Activated CD4-positive, alpha-beta memory T cell treated with anti-CD3 and anti-CD28 coated beads for 36 hours (primary cell): ENCODE measurements at regions of chr3 and their contacts with region 1.

Region 1: GRCh38 chr3:9430733-9431132 is 33.3 kb downstream of the SETD5 start:
- DNase-seq: no peak
- H3K4me3 Mint-ChIP-seq: no peak overlapping the region
- H3K27ac Mint-ChIP-seq: no peak overlapping the region
- H3K4me1 Mint-ChIP-seq: peaks cover 2% of the 10 kb centered on the region
- H3K27me3 Mint-ChIP-seq: no peaks in the 10 kb centered on the region

Region 2: GRCh38 chr3:9468460-9468859 is 37.7 kb after region 1 on chr3:
- CTCF ChIA-PET with region 1: no interaction called
- POLR2A ChIA-PET with region 1: no interaction called
- intact Hi-C with region 1: loop called (anchors 5 kb)
- DNase-seq: peak; percentile 51
- H3K4me3 Mint-ChIP-seq: no peak overlapping the region
- H3K27ac Mint-ChIP-seq: peak overlapping the region; percentile 23
- H3K4me1 Mint-ChIP-seq: peaks cover 15% of the 10 kb centered on the region
- H3K27me3 Mint-ChIP-seq: no peaks in the 10 kb centered on the region